ENCODE measurements at regions of chr5 and their contacts with region 1.

Region 1: DNA sequence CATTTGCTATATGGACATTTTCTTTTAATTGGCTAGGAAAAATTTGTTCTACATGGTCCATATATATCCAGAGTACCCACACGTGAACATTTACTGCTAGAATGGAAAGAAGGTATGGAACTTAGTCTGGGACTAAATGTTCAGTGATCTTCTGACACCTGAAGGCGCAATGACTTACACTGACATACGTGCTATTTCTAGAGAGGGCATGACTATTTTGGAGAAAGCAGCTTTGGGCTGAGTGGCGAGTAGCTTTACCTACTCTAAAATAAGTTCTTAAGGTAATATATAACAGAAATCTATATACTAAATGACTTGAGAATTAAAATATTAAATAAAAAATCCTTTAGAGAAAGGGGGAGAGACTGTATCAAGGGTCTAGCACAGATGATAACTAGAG is 10.4 kb downstream of the NNT start:
- DNase-seq: peak in 1 of 2 donors; percentile 28
- ATAC-seq: peak; percentile 82 to 91
- H3K4me3 ChIP-seq: no peak overlapping the region
- H3K27ac ChIP-seq: peak overlapping the region; percentile 85 to 96 (median 90)
- H3K4me1 ChIP-seq: peaks cover 61 to 62% of the 10 kb centered on the region in 2 donors
- H3K27me3 ChIP-seq: no peaks in the 10 kb centered on the region
- CTCF ChIP-seq: no peak
- POLR2A ChIP-seq: peak; percentile 44 to 66

Region 2: GRCh38 chr5:43602461-43603343 is 10.7 kb before region 1 on chr5 and contains the start of gene NNT:
- in situ Hi-C with region 1: no loop called
- intact Hi-C with region 1: loop called (anchors 1 kb)
- DNase-seq: peak; percentile 75 to 78
- ATAC-seq: peak; percentile 45 to 46
- H3K4me3 ChIP-seq: peak within 1 kb of the TSS; percentile 75 to 85 (median 82)
- H3K27ac ChIP-seq: peak within 1 kb of the TSS; percentile 92 to 98 (median 97)
- H3K4me1 ChIP-seq: peaks cover 46 to 64% of the 10 kb centered on the region in 2 donors
- H3K27me3 ChIP-seq: no peaks in the 10 kb centered on the region
- CTCF ChIP-seq: peak in 1 of 5 experiments; percentile 8
- POLR2A ChIP-seq: peak; percentile 62 to 66
- total RNA-seq, gene NNT: 90.3 to 149 (median 127) TPM